Upper lobe of right lung (tissue), 1 donor: ENCODE measurements at regions of chrX and their contacts with region 1.

Region 1: GRCh38 chrX:88672261-88672660 is 74.8 kb upstream of the CPXCR1 start:
- DNase-seq: no peak
- ATAC-seq: no peak
- H3K4me3 ChIP-seq: no peak overlapping the region
- H3K27ac ChIP-seq: no peak overlapping the region
- H3K4me1 ChIP-seq: no peaks in the 10 kb centered on the region
- H3K27me3 ChIP-seq: no peaks in the 10 kb centered on the region
- CTCF ChIP-seq: no peak

Region 2: GRCh38 chrX:88621278-88621677 is 51.0 kb before region 1 on chrX:
- intact Hi-C with region 1: loop called (anchors 10 kb)
- DNase-seq: no peak
- ATAC-seq: no peak
- H3K4me3 ChIP-seq: no peak overlapping the region
- H3K27ac ChIP-seq: no peak overlapping the region
- H3K4me1 ChIP-seq: no peaks in the 10 kb centered on the region
- H3K27me3 ChIP-seq: no peaks in the 10 kb centered on the region
- CTCF ChIP-seq: no peak

Region 3: DNA sequence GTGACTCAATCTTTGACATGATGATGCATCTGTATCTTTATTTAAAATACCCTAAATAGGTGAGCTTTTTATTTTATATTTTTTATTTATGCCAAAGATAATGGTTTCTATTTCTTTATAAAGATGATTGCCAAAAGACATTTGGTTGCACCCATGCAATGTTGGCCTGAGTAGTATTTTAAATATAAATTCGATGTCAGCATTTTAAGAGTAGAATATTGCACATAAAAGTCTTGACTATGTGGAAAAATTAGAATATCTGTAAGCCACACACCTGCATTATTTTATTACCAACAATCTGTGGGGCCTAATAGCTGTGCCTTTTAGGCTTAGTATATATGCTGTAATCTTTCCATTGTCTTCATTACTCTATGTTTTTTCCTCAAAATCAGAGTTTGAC is 166.1 kb after region 1 on chrX:
- intact Hi-C with region 1: no loop called
- DNase-seq: no peak
- ATAC-seq: no peak
- H3K4me3 ChIP-seq: no peak overlapping the region
- H3K27ac ChIP-seq: no peak overlapping the region
- H3K4me1 ChIP-seq: no peaks in the 10 kb centered on the region
- H3K27me3 ChIP-seq: no peaks in the 10 kb centered on the region
- CTCF ChIP-seq: no peak

Region 4: GRCh38 chrX:88883205-88883604 is 210.9 kb after region 1 on chrX:
- intact Hi-C with region 1: no loop called
- DNase-seq: no peak
- ATAC-seq: no peak
- H3K4me3 ChIP-seq: no peak overlapping the region
- H3K27ac ChIP-seq: no peak overlapping the region
- H3K4me1 ChIP-seq: no peaks in the 10 kb centered on the region
- H3K27me3 ChIP-seq: no peaks in the 10 kb centered on the region
- CTCF ChIP-seq: no peak

Region 5: DNA sequence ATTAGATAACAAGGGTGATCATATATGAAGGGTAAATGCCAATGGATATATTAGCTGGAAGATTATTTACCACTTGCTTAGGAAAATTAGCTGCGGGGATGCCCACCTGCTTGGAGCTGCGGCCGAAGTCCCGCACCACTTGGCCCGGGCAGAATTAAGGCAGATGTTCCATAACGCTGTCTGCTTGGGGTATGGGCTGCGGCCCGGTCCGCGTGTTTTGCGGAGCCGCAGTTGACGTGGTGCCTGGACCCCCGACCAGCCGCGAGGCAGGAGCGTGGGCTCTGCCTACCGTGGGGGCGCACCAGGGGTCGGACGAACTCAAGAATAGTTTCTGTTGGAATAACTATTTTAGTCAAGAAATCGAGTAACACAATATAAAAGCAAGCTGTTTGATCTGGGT is 309.9 kb after region 1 on chrX:
- intact Hi-C with region 1: no loop called
- DNase-seq: no peak
- ATAC-seq: no peak
- H3K4me3 ChIP-seq: no peak overlapping the region
- H3K27ac ChIP-seq: no peak overlapping the region
- H3K4me1 ChIP-seq: no peaks in the 10 kb centered on the region
- H3K27me3 ChIP-seq: no peaks in the 10 kb centered on the region
- CTCF ChIP-seq: no peak